Ascending aorta (tissue), 2 donors: ENCODE measurements at regions of chr4 and their contacts with region 1.

Region 1: GRCh38 chr4:1712216-1713002 is at the start of gene SLBP:
- DNase-seq: peak; percentile 86 to 98
- H3K4me3 ChIP-seq: peak within 1 kb of the TSS; percentile 93 to 94
- H3K27ac ChIP-seq: peak within 1 kb of the TSS; percentile 99 to 100
- H3K4me1 ChIP-seq: peaks cover 0 to 10% of the 10 kb centered on the region in 2 donors
- H3K27me3 ChIP-seq: no peaks in the 10 kb centered on the region
- CTCF ChIP-seq: no peak
- total RNA-seq, gene SLBP: 218 TPM

Region 2: GRCh38 chr4:1579901-1580691 is 132.3 kb before region 1 on chr4:
- intact Hi-C with region 1: loop called (anchors 5 kb)
- DNase-seq: peak; percentile 72 to 95
- H3K4me3 ChIP-seq: peak overlapping the region; percentile 58 to 95
- H3K27ac ChIP-seq: peak overlapping the region; percentile 63 to 74
- H3K4me1 ChIP-seq: peaks cover 4% of the 10 kb centered on the region in 2 donors
- H3K27me3 ChIP-seq: no peaks in the 10 kb centered on the region
- CTCF ChIP-seq: no peak

Region 3: DNA sequence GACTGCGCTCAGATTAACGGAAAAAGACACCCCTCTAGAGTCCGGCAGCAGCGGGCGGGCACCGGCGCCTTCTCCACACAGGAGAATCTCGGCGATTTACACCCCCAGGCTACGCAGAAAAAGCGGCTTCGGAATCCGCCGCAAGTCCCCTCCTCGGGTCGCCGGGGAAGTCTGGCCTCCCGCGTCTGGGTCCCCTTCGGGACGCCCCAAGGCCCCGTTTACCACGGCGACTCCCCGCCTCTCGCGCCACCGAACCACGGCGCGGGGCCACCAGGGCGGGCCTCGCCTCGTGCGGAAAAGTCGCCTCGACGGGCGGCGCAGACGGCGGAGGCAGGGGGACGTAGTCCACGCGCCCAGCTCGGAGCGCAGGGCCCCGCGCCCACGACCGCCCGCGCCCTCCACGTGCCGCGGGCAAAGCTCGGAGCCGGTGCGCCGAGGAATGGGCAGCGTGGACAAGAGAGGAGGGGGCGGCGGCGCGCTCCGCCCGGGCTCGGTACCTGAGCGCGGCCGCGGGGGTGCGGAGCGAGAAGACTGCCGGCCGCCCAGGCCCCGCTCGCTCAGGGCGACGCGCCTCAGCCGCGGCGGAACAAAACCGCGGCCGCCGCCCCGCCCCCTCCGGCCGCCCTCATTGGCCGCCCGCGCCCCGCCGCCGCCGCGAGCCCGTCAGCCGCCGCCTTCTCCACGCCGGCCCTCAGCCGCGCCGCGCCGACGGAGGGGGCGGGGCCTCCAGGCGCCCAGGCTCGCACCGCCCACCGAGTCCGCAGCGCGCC is 28.5 kb before region 1 on chr4 and contains the start of gene FAM53A:
- intact Hi-C with region 1: loop called (anchors 1 kb)
- DNase-seq: peak in 1 of 2 donors; percentile 59
- H3K4me3 ChIP-seq: peak within 1 kb of the TSS; percentile 73 to 76
- H3K27ac ChIP-seq: peak within 1 kb of the TSS; percentile 64 to 85
- H3K4me1 ChIP-seq: peaks cover 0 to 7% of the 10 kb centered on the region in 2 donors
- H3K27me3 ChIP-seq: no peaks in the 10 kb centered on the region
- CTCF ChIP-seq: no peak
- total RNA-seq, gene FAM53A: not detected

Region 4: DNA sequence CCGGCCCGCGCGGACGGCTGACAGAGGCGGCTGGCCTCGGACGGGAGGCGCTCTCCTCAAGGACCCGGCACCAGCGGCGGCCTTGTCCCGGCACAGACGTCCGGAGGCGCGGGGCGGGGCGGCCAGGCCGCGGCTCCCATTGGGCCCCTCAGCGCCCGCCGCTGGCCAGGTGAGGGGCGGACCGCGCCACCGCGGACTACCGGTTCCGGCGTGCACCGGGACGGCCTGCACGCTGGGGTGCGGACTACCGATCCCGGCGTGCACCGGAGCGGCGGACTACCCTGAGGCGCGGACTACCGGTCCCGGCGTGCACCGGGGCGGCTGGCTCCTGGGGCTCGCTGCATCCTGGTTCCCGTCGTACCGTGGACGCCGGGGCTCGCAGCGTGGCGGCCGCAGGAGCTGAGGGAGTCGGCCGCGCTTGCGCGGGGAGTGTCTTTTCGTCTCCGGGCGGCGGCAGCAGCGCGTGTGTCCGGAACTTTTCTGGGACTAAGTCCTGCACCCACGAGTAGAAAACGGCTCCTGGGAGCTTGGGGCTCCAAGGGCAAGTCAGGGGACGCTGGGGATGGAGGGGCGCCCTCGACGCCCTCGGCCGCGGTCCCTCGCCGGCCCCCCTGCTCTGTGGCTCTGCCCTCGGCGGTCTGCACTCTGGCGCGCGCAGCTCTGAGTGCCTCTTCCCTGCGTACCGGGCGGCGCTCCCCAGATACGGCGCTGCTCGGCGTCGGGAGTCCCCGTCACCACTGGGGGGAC is 143.8 kb after region 1 on chr4 and contains the start of gene LETM1:
- intact Hi-C with region 1: loop called (anchors 2 kb)
- DNase-seq: peak; percentile 86 to 97
- H3K4me3 ChIP-seq: peak within 1 kb of the TSS; percentile 85 to 86
- H3K27ac ChIP-seq: peak within 1 kb of the TSS; percentile 78 to 82
- H3K4me1 ChIP-seq: peaks cover 0 to 10% of the 10 kb centered on the region in 2 donors
- H3K27me3 ChIP-seq: no peaks in the 10 kb centered on the region
- CTCF ChIP-seq: peak in 1 of 3 experiments; percentile 28
- total RNA-seq, gene LETM1: 37.7 TPM

Region 5: GRCh38 chr4:2008875-2009703 is 296.7 kb after region 1 on chr4 and contains the start of gene NELFA:
- intact Hi-C with region 1: loop called (anchors 2 kb)
- DNase-seq: peak; percentile 63 to 96
- H3K4me3 ChIP-seq: peak within 1 kb of the TSS; percentile 84 to 98
- H3K27ac ChIP-seq: peak within 1 kb of the TSS; percentile 96 to 98
- H3K4me1 ChIP-seq: peaks cover 0 to 2% of the 10 kb centered on the region in 2 donors
- H3K27me3 ChIP-seq: no peaks in the 10 kb centered on the region
- CTCF ChIP-seq: peak in 2 of 3 experiments; percentile 44 to 54
- total RNA-seq, gene NELFA: 11.9 TPM